ENCODE measurements at regions of chr2 and their contacts with region 1.

Region 1: GRCh38 chr2:25664183-25664964 is 9.0 kb downstream of the DTNB start:
- DNase-seq: peak; percentile 83
- H3K4me3 ChIP-seq: no peak overlapping the region
- H3K27ac ChIP-seq: no peak overlapping the region
- H3K4me1 ChIP-seq: peaks cover 15% of the 10 kb centered on the region
- H3K27me3 ChIP-seq: no peaks in the 10 kb centered on the region
- CTCF ChIP-seq: peak; percentile 86

Region 2: DNA sequence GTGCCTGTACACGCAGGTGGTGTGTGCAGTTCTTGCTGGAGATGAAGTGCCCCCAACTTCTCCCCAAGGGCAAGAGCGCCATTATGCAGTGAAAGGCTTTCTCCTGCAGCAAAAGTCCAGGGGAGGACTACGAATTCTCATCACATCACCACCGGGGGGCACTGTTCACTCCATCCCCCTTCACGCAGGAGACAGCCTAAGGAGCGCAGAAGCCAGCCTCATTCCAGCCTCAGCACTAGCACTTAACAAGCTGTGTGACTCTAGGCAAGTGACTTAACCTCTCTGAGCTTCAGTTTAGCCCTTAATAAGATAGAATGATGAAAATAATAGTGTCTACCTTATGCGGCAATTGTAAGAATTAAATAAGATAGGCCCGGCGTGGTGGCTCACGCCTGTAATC is 355.0 kb before region 1 on chr2:
- CTCF ChIA-PET with region 1: no interaction called
- POLR2A ChIA-PET with region 1: no interaction called
- intact Hi-C with region 1: loop called (anchors 10 kb)
- DNase-seq: peak; percentile 82
- H3K4me3 ChIP-seq: no peak overlapping the region
- H3K27ac ChIP-seq: no peak overlapping the region
- H3K4me1 ChIP-seq: peaks cover 61% of the 10 kb centered on the region
- H3K27me3 ChIP-seq: no peaks in the 10 kb centered on the region
- CTCF ChIP-seq: peak; percentile 68

Measured in A673 (cell line).